CD14-positive monocyte (primary cell): ENCODE measurements at regions of chr15 and their contacts with region 1.

Region 1: DNA sequence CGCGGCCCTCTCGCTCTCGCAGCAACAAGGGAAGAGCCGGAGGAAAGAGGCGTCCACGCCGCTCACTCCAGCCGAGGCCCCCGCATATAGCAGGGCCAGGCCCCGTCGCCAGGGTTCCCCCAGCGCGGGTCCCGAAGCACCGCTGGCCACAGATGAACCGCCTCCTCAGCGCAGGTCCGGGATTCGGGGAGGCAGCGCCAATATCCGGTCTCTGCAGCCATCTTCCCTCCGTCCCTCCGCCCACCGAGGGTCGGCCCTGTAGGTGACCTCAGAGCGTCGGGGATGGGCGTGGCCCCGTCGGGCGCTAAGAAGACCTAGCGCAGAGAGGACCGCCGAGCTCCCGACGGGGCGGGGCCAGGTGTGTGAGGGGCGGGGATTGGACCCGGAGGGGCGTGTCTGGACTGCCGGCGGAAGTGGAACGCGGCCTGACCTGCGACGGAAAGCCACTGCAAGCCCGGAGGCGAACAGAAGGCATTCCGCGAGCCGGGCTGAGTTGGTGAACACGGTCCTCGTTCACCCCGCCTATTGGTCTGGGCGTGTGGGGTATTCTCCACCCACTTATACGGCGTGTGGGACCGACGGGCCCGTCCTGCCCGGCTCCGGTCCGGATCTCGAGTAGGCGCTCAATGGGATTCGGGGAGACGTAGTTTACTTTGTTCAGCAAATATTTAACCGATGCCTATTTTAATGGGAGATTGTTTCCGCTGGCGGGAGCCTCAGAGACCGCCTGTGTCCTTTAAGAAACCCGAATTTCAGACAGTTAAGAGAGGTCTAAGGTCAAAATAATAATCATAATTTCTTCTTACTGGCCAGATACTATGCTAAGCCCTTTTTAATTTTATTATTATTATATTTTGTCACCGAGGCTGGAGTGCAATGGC is 26.9 kb upstream of the MTHFS start:
- DNase-seq: peak; percentile 89 to 96 (median 89)
- H3K4me3 ChIP-seq: peak overlapping the region; percentile 61 to 95 (median 70)
- H3K4me3 Mint-ChIP-seq: peak overlapping the region; percentile 91 to 92
- H3K27ac ChIP-seq: peak overlapping the region; percentile 91 to 92
- H3K27ac Mint-ChIP-seq: peak overlapping the region; percentile 95 to 97 (median 97)
- H3K4me1 ChIP-seq: peaks cover 17 to 26% of the 10 kb centered on the region in 2 donors
- H3K4me1 Mint-ChIP-seq: peaks cover 13% of the 10 kb centered on the region
- H3K27me3 ChIP-seq: no peaks in the 10 kb centered on the region
- H3K27me3 Mint-ChIP-seq: peaks cover 1 to 7% (median 3%) of the 10 kb centered on the region in 3 donors
- CTCF ChIP-seq: no peak

Region 2: GRCh38 chr15:79872358-79873017 is 51.3 kb before region 1 on chr15:
- intact Hi-C with region 1: loop called in 1 of 2 experiments (anchors 10 kb)
- DNase-seq: peak; percentile 80 to 86 (median 84)
- H3K4me3 ChIP-seq: no peak overlapping the region
- H3K4me3 Mint-ChIP-seq: no peak overlapping the region
- H3K27ac ChIP-seq: peak overlapping the region in 1 of 2 donors; percentile 71
- H3K27ac Mint-ChIP-seq: peak overlapping the region; percentile 61 to 92 (median 85)
- H3K4me1 ChIP-seq: peaks cover 3 to 11% of the 10 kb centered on the region in 2 donors
- H3K4me1 Mint-ChIP-seq: peaks cover 14% of the 10 kb centered on the region
- H3K27me3 ChIP-seq: no peaks in the 10 kb centered on the region
- H3K27me3 Mint-ChIP-seq: no peaks in the 10 kb centered on the region
- CTCF ChIP-seq: no peak

Region 3: GRCh38 chr15:79904271-79904670 is 19.5 kb before region 1 on chr15:
- intact Hi-C with region 1: loop called in 1 of 2 experiments (anchors 2 kb)
- DNase-seq: peak in 2 of 3 donors; percentile 46 to 68
- H3K4me3 ChIP-seq: peak overlapping the region in 1 of 3 experiments; percentile 26
- H3K4me3 Mint-ChIP-seq: no peak overlapping the region
- H3K27ac ChIP-seq: peak overlapping the region in 1 of 2 donors; percentile 65
- H3K27ac Mint-ChIP-seq: peak overlapping the region; percentile 42 to 91 (median 80)
- H3K4me1 ChIP-seq: peaks cover 55 to 67% of the 10 kb centered on the region in 2 donors
- H3K4me1 Mint-ChIP-seq: peaks cover 57% of the 10 kb centered on the region
- H3K27me3 ChIP-seq: no peaks in the 10 kb centered on the region
- H3K27me3 Mint-ChIP-seq: no peaks in the 10 kb centered on the region
- CTCF ChIP-seq: no peak

Region 4: DNA sequence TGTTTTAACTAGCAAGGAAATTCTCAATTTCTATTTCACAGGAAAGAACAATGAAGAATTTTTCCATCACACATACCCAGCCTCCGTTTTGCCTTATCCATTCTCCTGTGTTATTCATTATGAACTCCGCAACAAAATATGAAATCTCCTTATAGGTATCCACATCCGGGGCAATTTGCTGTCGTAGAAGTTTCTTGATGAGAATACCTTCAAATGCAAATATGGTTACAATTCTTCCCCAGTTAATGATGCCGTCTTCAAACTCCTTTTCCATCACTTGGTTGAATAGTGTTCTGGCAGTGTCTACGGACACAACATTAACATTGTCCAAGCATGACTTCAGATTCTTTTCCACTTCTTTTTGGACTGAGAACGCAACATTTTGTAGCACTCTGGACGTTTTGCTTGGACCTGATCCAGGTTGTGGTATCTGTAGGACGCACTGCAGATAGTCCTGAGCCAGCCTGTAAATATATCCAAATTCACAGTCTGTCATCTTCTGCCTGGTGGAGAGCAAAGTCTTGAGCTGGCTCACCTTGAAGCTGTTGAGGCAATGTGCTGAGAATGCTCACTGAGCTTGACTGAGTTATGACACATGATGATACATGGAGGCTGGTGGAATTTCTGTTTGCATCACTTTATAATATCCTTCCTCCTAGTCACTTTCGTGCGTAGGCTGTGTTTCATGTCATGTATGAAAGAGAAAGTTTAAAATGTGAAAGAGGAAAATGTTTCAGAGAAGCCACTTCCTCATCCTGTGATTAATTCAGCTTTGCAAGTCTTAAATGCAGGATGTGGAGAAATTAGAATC is 47.1 kb after region 1 on chr15 and contains the start of gene BCL2A1:
- intact Hi-C with region 1: loop called (anchors 5 kb)
- DNase-seq: peak; percentile 93 to 99 (median 98)
- H3K4me3 ChIP-seq: peak within 1 kb of the TSS; percentile 49 to 100 (median 100)
- H3K4me3 Mint-ChIP-seq: peak within 1 kb of the TSS; percentile 94 to 95
- H3K27ac ChIP-seq: peak within 1 kb of the TSS; percentile 64 to 94
- H3K27ac Mint-ChIP-seq: peak within 1 kb of the TSS; percentile 97 to 100 (median 99)
- H3K4me1 ChIP-seq: peaks cover 61 to 70% of the 10 kb centered on the region in 2 donors
- H3K4me1 Mint-ChIP-seq: peaks cover 56% of the 10 kb centered on the region
- H3K27me3 ChIP-seq: no peaks in the 10 kb centered on the region
- H3K27me3 Mint-ChIP-seq: no peaks in the 10 kb centered on the region
- CTCF ChIP-seq: no peak
- polyA plus RNA-seq, gene BCL2A1: 277 to 465 (median 350) TPM

Region 5: DNA sequence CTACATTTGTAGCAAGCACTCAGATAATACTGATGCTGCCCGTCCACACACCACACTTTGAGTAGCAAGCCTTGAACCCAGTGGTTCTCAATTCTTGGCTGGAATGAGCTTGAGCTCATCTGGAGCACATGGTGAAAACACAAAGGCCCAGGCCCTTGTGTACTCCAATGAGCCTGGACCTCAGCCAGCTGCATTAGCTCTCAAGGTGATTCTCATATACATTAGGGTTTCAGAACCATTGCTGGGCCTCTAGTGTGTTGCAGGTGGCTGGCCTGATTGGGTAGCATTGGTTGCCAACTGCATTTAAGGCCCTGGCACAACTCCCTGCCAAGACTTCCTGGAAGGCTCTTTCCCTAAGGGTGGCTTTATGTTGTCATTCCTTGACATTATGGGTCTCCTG is 112.3 kb after region 1 on chr15:
- intact Hi-C with region 1: no loop called
- DNase-seq: no peak
- H3K4me3 ChIP-seq: no peak overlapping the region
- H3K4me3 Mint-ChIP-seq: no peak overlapping the region
- H3K27ac ChIP-seq: no peak overlapping the region
- H3K27ac Mint-ChIP-seq: no peak overlapping the region
- H3K4me1 ChIP-seq: no peaks in the 10 kb centered on the region
- H3K4me1 Mint-ChIP-seq: peaks cover 9% of the 10 kb centered on the region
- H3K27me3 ChIP-seq: no peaks in the 10 kb centered on the region
- H3K27me3 Mint-ChIP-seq: no peaks in the 10 kb centered on the region
- CTCF ChIP-seq: no peak